MCF 10A (cell line): ENCODE measurements at regions of chr12 and their contacts with region 1.

Region 1: GRCh38 chr12:47904713-47905310 is at the start of gene VDR:
- DNase-seq: peak; percentile 90
- H3K4me3 Mint-ChIP-seq: peak within 1 kb of the TSS; percentile 93
- H3K27ac Mint-ChIP-seq: peak within 1 kb of the TSS; percentile 82
- H3K4me1 Mint-ChIP-seq: peaks cover 37% of the 10 kb centered on the region
- H3K27me3 Mint-ChIP-seq: no peaks in the 10 kb centered on the region
- CTCF ChIP-seq: no peak
- total RNA-seq, gene VDR: 22.3 and 23.4 TPM in 2 replicates

Region 2: DNA sequence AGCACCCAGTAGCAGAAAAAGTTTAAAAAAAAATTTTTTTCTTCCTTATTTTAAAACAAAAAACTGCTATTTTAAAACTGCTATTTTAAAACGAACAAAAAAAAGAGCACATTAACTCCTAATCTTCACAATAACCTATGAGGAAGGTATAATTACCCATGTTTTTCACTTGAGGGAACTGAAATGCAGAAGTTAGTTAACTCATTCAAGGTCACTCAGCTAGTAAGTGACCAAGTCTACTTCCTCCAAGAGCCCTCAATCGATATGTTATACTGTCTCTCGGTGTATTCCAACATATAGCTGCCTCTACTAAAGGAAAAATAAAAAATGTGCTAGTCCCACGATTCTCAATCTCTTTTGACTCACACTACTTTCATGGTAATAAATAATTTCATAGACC is 206.8 kb before region 1 on chr12:
- CTCF ChIA-PET with region 1: no interaction called
- POLR2A ChIA-PET with region 1: no interaction called
- intact Hi-C with region 1: no loop called
- DNase-seq: no peak
- H3K4me3 Mint-ChIP-seq: no peak overlapping the region
- H3K27ac Mint-ChIP-seq: no peak overlapping the region
- H3K4me1 Mint-ChIP-seq: no peaks in the 10 kb centered on the region
- H3K27me3 Mint-ChIP-seq: no peaks in the 10 kb centered on the region
- CTCF ChIP-seq: no peak

Region 3: GRCh38 chr12:47819896-47820630 is 84.7 kb before region 1 on chr12 and contains the start of gene HDAC7:
- CTCF ChIA-PET with region 1: no interaction called
- POLR2A ChIA-PET with region 1: interaction called, 10 read pairs
- intact Hi-C with region 1: no loop called
- DNase-seq: peak; percentile 81
- H3K4me3 Mint-ChIP-seq: peak within 1 kb of the TSS; percentile 98
- H3K27ac Mint-ChIP-seq: peak within 1 kb of the TSS; percentile 93
- H3K4me1 Mint-ChIP-seq: peaks cover 73% of the 10 kb centered on the region
- H3K27me3 Mint-ChIP-seq: no peaks in the 10 kb centered on the region
- CTCF ChIP-seq: no peak
- total RNA-seq, gene HDAC7: 65.0 and 80.1 TPM in 2 replicates

Region 4: DNA sequence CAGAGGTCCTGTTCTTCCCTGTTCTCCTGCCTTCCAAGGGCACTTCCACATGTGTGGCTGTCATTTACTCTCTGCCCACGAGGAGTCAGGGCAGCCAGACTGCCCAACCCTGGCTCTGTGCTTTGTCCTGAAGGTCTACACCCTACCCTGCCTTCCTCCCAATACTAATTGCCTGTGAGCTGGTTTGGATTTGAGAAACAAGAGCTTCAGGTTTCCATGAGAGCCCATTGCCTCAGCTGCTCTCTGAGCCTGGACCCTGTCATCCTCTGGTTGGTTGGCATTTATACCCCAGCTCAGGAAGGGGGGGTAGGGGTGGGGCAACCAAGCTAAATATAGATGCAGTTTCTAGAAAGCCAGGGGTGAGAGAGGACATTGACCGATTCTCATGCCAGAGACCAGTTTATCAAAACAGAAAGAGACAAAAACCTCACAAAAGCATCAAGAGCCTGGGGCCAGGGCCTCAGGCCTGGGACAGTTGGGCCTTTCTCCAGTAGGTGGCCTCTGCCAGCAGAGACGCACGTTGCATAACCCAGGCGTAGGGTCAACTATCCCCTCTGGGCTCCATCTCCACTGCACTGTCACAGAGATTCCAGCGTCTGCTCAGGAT is 34.5 kb before region 1 on chr12:
- CTCF ChIA-PET with region 1: interaction called, 5 read pairs
- POLR2A ChIA-PET with region 1: interaction called, 46 read pairs
- intact Hi-C with region 1: no loop called
- DNase-seq: peak; percentile 46
- H3K4me3 Mint-ChIP-seq: no peak overlapping the region
- H3K27ac Mint-ChIP-seq: no peak overlapping the region
- H3K4me1 Mint-ChIP-seq: peaks cover 6% of the 10 kb centered on the region
- H3K27me3 Mint-ChIP-seq: no peaks in the 10 kb centered on the region
- CTCF ChIP-seq: peak; percentile 31

Region 5: DNA sequence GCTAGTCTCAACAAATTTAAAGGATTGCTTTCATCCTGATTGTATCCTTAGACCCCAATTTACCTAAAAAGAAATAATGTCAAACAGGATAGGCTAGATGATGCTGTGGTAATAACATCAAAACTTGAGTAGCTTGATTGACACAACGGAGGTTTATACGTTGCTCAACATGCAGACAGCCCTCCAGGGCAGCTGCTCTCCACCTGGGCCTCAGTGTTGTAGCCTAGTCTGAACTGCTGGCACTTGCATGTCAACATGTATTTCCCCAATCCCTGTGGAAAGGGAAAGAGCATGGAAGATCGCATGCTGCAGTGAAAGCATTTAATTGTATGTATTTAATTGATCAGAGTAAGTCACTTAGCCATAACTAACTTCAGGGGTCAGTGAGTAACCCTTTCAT is 11.7 kb after region 1 on chr12:
- CTCF ChIA-PET with region 1: interaction called, 13 read pairs
- POLR2A ChIA-PET with region 1: interaction called, 10 read pairs
- intact Hi-C with region 1: no loop called
- DNase-seq: no peak
- H3K4me3 Mint-ChIP-seq: no peak overlapping the region
- H3K27ac Mint-ChIP-seq: no peak overlapping the region
- H3K4me1 Mint-ChIP-seq: no peaks in the 10 kb centered on the region
- H3K27me3 Mint-ChIP-seq: peaks cover 13% of the 10 kb centered on the region
- CTCF ChIP-seq: no peak

Region 6: GRCh38 chr12:47963340-47964040 is 58.7 kb after region 1 on chr12 and contains the start of gene TMEM106C:
- CTCF ChIA-PET with region 1: interaction called, 20 read pairs
- POLR2A ChIA-PET with region 1: interaction called, 7 read pairs
- intact Hi-C with region 1: loop called (anchors 1 kb)
- DNase-seq: peak; percentile 87
- H3K4me3 Mint-ChIP-seq: peak within 1 kb of the TSS; percentile 98
- H3K27ac Mint-ChIP-seq: peak within 1 kb of the TSS; percentile 66
- H3K4me1 Mint-ChIP-seq: peaks cover 15% of the 10 kb centered on the region
- H3K27me3 Mint-ChIP-seq: no peaks in the 10 kb centered on the region
- CTCF ChIP-seq: peak; percentile 95
- total RNA-seq, gene TMEM106C: 39.0 and 50.0 TPM in 2 replicates

Region 7: GRCh38 chr12:48165094-48165981 is 260.5 kb after region 1 on chr12:
- CTCF ChIA-PET with region 1: interaction called, 4 read pairs
- POLR2A ChIA-PET with region 1: no interaction called
- intact Hi-C with region 1: loop called (anchors 1 kb)
- DNase-seq: peak; percentile 72
- H3K4me3 Mint-ChIP-seq: no peak overlapping the region
- H3K27ac Mint-ChIP-seq: no peak overlapping the region
- H3K4me1 Mint-ChIP-seq: no peaks in the 10 kb centered on the region
- H3K27me3 Mint-ChIP-seq: peaks cover 11% of the 10 kb centered on the region
- CTCF ChIP-seq: peak; percentile 87